Activated B cell treated with CpG ODN at 0.5 μM for 24 hours (primary cell): ENCODE measurements at regions of chr11 and their contacts with region 1.

Region 1: DNA sequence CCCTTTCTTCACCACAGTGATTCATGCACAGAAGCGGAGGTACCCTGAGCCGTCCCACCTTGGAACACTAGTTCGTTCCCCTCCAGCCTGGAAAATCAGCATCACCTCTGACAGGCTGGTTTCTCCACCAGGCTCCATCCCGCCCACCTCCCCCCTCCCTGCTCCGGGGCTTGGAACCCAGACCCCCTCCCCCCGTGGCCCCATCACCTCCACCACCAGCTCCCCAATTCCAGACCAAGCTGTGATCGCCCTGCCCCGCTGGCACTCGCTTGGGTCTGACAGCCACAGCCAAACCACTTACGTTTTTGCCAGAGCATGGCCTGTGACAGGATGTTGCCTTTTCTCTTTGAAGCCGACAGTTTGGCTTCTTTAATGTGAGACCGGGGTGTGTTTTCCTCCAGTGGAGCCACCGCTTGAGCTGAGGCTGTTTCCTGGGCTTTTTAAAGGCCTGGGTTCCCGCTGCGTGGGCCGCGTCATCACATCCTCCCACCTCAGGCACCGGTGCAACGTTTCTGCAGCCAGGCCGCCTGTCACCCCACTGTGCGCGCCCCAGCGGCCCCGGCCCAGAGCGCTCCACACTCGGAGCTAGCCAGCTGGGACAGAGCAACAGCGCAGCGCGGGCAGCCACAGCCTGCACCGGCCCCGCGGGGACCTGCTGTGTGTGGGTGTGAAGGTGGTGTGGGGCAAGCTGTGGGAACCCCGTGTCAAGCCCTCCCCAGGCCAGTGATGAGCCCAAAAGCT is at the start of gene POU2AF1:
- DNase-seq: peak; percentile 76
- ATAC-seq: peak; percentile 69
- H3K4me3 Mint-ChIP-seq: peak within 1 kb of the TSS; percentile 96
- H3K27ac Mint-ChIP-seq: peak within 1 kb of the TSS; percentile 98
- H3K4me1 Mint-ChIP-seq: peaks cover 88% of the 10 kb centered on the region
- H3K27me3 Mint-ChIP-seq: no peaks in the 10 kb centered on the region
- CTCF ChIP-seq: no peak
- total RNA-seq, gene POU2AF1: 141 and 155 TPM in 2 replicates

Region 2: DNA sequence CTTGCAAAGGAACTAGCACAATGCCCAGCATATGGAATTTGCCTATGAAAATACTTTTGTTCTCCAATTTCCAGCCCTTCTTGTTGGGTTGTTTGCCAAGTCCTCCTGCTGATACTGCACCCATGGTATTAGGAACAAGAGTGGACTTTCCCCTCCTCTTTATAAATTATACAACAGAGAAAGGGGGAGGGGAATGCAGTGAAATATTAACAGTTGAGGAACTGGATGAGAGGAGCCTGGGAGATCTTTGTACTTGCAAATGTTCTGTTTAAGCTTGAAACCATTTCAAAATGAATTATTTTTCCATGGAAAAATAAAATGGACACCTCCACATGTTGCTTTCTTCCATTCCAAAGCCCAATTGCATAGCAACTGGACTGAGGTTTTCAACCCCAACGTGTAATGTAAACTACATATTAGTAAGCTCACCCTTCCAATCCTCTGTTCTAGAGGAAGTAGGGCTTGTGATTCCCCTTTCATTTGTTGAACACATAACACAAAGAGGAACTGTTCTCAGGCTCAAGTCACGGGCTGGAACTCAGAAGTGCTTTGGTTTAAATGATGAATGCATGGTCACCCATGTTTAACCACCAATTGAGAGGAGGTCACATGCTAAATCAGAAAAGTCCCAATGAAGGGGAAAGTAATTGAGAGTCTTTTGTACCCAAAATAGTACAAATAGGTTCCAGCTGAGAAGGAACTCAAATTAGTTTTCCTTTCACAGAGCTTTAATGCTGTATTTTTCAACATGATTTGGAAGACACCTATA is 1352.0 kb before region 1 on chr11:
- CTCF ChIA-PET with region 1: no interaction called
- POLR2A ChIA-PET with region 1: no interaction called
- intact Hi-C with region 1: loop called (anchors 10 kb)
- DNase-seq: no peak
- ATAC-seq: peak; percentile 95
- H3K4me3 Mint-ChIP-seq: peak overlapping the region; percentile 21
- H3K27ac Mint-ChIP-seq: peak overlapping the region; percentile 59
- H3K4me1 Mint-ChIP-seq: peaks cover 30% of the 10 kb centered on the region
- H3K27me3 Mint-ChIP-seq: peaks cover 34% of the 10 kb centered on the region
- CTCF ChIP-seq: no peak

Region 3: GRCh38 chr11:111230122-111230465 is 148.9 kb before region 1 on chr11:
- CTCF ChIA-PET with region 1: no interaction called
- POLR2A ChIA-PET with region 1: no interaction called
- intact Hi-C with region 1: no loop called
- DNase-seq: no peak
- ATAC-seq: peak; percentile 9
- H3K4me3 Mint-ChIP-seq: peak overlapping the region; percentile 72
- H3K27ac Mint-ChIP-seq: no peak overlapping the region
- H3K4me1 Mint-ChIP-seq: peaks cover 40% of the 10 kb centered on the region
- H3K27me3 Mint-ChIP-seq: no peaks in the 10 kb centered on the region
- CTCF ChIP-seq: no peak

Region 4: DNA sequence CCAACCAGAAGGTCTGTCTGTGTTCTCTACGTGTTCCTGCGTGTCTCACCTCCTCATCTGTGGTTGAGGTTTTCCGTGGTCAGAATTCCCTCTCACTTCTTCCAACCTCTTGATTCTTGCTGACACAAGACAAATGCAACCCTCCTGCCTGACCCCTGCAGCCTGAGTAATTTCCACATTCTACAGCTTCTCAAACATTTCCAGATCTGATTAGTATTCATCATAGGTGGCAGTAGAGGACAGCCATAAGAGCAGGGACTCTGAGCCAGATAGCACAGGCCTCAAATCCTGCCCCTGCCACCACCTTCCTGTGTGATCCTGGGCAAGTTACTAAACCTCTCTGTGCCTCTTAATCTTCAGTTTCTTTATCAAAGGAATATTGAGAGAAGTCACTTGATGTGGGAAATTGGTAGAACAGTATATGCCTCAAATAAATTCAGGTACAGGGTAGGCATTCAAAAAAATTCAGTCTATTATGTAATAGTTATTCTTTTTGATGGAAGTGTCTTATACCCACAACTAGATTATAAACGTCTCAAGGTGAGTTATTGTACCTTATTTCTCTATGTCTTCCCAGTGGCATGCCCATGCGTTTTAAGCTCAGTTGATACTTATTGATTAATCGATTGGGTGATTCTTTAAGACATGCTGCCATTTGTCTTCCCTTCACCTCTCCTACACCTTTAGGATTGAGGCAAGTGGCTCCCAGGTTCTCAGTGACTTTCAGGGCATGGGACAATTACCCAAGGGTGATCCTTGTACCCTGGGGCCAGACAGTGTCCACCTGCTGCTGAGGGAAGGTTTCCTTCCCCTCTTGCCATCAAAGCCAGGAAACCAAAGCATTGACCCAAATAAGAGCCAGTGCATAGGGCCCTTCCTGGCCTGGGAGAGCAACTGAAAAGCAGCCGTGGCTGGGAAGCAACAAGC is 19.5 kb before region 1 on chr11:
- CTCF ChIA-PET with region 1: no interaction called
- POLR2A ChIA-PET with region 1: interaction called, 95 read pairs
- intact Hi-C with region 1: no loop called
- DNase-seq: no peak
- ATAC-seq: peak; percentile 51
- H3K4me3 Mint-ChIP-seq: no peak overlapping the region
- H3K27ac Mint-ChIP-seq: no peak overlapping the region
- H3K4me1 Mint-ChIP-seq: peaks cover 24% of the 10 kb centered on the region
- H3K27me3 Mint-ChIP-seq: no peaks in the 10 kb centered on the region
- CTCF ChIP-seq: no peak

Region 5: DNA sequence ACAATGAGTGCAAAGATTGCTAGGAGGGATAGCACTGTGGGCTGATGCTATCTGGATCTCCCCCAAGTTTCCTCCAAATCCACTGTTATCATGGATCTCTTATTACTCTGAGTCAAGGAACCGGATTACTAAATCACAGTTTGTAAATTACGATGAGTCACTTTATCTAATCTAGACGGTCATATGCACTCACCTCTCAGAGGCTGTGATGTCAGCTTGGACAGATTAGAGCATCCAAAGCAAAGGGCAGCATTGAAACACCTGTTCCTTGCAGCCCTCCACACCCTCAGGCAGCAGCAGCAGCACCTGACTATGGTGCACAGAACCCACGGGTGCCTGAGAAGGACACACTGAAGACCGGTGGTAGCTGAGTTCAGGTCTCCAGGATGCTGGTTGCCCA is 14.1 kb after region 1 on chr11:
- CTCF ChIA-PET with region 1: interaction called, 4 read pairs
- POLR2A ChIA-PET with region 1: interaction called, 91 read pairs
- intact Hi-C with region 1: loop called (anchors 1 kb)
- DNase-seq: no peak
- ATAC-seq: no peak
- H3K4me3 Mint-ChIP-seq: no peak overlapping the region
- H3K27ac Mint-ChIP-seq: peak overlapping the region; percentile 93
- H3K4me1 Mint-ChIP-seq: peaks cover 89% of the 10 kb centered on the region
- H3K27me3 Mint-ChIP-seq: no peaks in the 10 kb centered on the region
- CTCF ChIP-seq: no peak

Region 6: DNA sequence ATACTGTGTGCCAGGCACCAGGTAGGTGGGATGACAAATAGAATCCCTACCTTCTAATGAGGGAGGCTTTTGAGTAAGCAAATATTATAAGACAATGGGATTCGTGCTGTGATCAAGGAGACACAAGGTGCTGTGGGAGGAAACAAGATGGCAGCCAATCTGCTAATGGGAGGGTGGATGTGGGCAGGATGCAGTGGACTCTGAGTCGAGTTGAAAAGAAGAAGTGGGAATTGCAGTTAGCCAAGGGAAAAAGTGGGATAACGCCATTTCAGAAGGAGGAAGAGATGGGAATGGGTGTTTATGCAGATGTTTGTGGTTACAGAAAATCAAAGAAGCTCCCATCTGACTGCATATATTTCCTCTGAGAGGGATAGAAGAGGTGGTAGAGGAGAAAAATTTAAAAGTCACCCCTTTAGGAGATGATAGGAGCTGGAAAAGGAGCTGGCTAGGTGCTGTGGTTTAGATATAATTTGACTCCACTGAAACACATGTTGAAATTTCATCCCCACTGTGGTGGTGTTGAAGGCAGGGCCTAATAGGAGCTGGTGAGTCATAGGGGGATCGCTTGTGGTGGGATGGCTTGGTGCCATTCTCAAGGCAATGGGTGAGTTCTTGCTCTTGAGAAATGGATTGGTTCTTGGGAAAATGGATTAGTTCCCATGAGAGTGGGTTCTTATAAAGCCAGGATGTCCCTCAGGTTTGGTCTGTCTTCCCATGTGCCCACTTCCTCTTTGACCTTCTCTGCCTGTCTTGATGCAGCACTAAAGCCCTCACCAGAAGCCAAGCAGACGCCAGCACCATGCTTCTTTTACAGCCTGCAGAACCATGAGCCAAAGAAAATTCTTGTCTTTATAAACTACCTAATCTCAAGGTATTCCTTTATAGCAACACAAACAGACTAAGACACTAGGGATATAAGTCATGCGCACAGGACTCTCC is 30.0 kb after region 1 on chr11:
- CTCF ChIA-PET with region 1: interaction called, 8 read pairs
- POLR2A ChIA-PET with region 1: interaction called, 581 read pairs
- intact Hi-C with region 1: no loop called
- DNase-seq: no peak
- ATAC-seq: no peak
- H3K4me3 Mint-ChIP-seq: peak overlapping the region; percentile 51
- H3K27ac Mint-ChIP-seq: peak overlapping the region; percentile 90
- H3K4me1 Mint-ChIP-seq: peaks cover 80% of the 10 kb centered on the region
- H3K27me3 Mint-ChIP-seq: no peaks in the 10 kb centered on the region
- CTCF ChIP-seq: no peak

Region 7: GRCh38 chr11:112174789-112175598 is 796.0 kb after region 1 on chr11 and contains the start of gene BCO2:
- CTCF ChIA-PET with region 1: no interaction called
- POLR2A ChIA-PET with region 1: no interaction called
- intact Hi-C with region 1: no loop called
- DNase-seq: peak; percentile 18
- ATAC-seq: peak; percentile 74
- H3K4me3 Mint-ChIP-seq: peak within 1 kb of the TSS; percentile 46
- H3K27ac Mint-ChIP-seq: no peak within 1 kb of the TSS
- H3K4me1 Mint-ChIP-seq: peaks cover 23% of the 10 kb centered on the region
- H3K27me3 Mint-ChIP-seq: peaks cover 9% of the 10 kb centered on the region
- CTCF ChIP-seq: no peak
- total RNA-seq, gene BCO2: 1.4 and 3.2 TPM in 2 replicates